H1 (cell line): ENCODE measurements at regions of chr1 and their contacts with region 1.

Region 1: GRCh38 chr1:15760520-15761211 is 2.1 kb downstream of the FBLIM1 start:
- DNase-seq: no peak
- H3K4me3 ChIP-seq: peak overlapping the region in 2 of 4 experiments; percentile 1 to 31; a peak in 3 of 8 replicates
- H3K27ac ChIP-seq: no peak overlapping the region
- H3K4me1 ChIP-seq: peaks cover 9 to 31% (median 27%) of the 10 kb centered on the region in 4 experiments
- H3K27me3 ChIP-seq: no peaks in the 10 kb centered on the region
- CTCF ChIP-seq: no peak
- EP300 ChIP-seq: no peak
- POLR2A ChIP-seq: no peak
- RAD21 ChIP-seq: peak; percentile 11 to 26; a peak in 1 of 4 replicates

Region 2: DNA sequence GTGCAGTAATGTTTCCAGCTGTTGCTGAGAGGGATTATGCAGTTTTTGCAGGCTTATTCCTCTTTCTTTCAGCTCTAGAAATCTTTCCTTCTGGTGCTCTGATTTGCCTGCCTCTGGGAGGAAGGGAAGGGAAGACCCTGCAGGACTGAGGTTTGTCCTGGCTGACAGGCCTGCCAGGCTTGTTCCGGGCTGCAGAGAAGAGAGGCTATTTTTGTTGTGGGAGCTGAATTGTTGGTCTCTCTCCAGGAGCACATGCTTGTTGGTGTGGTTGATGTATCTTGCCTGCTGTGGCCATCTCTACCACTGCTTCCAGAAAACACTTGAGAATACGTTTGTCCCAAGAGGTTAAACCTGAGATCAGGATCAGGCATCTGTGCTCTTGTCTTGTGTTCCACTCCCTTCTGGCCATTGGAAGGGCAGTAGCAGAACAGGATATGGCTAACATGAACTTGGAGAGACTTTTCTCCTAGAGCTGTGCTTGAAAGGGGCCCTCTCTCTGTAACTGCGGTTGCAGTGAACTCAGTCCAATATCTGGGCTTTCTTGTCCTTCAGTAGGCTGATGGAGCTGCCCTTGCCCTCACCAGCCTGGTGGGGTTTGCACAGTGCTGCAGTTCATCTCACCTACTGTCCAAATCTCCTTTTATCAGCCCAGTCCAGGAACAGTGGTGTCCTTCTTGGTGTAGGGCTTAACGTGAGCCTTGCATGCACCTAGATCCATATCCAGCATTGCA is 46.1 kb before region 1 on chr1:
- CTCF ChIA-PET with region 1: no interaction called
- POLR2A ChIA-PET with region 1: no interaction called
- DNase-seq: no peak
- H3K4me3 ChIP-seq: no peak overlapping the region
- H3K27ac ChIP-seq: no peak overlapping the region
- H3K4me1 ChIP-seq: no peaks in the 10 kb centered on the region
- H3K27me3 ChIP-seq: no peaks in the 10 kb centered on the region
- CTCF ChIP-seq: no peak
- EP300 ChIP-seq: no peak
- POLR2A ChIP-seq: no peak
- RAD21 ChIP-seq: no peak

Region 3: DNA sequence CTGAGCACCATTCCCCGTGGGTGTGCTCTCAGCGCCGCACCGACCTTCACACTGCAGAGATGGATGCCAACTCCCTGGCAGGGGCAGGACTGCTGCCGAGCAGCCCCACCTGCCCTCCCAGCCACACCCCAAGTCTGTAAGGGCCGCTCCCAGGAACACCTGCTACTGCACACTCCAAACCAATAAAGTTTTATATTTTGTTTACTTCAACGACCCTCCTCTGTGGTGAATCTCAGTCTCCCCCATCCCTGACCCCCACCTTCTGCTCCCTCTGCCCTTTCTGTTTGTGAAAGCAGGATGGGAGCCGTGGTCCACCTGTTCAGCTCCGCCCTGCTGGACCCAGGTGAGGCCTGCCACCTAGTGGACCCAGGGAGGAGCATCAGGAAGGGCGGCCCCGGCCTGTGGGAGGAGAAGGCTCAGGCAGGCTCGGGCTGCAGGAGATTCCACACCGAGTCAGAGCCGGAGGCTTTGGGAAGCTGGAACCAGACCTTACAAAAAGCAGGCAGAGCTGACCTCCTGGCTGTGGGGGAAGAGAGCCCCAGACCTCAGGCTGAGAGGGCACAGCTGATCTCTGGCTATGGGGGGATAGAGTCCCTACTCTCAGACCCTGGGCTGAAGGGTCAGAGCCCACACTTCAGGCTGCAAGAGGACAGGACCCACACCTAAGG is 19.3 kb before region 1 on chr1:
- CTCF ChIA-PET with region 1: interaction called, 11 read pairs
- POLR2A ChIA-PET with region 1: interaction called, 7 read pairs
- DNase-seq: peak; percentile 61 to 91
- H3K4me3 ChIP-seq: no peak overlapping the region
- H3K27ac ChIP-seq: no peak overlapping the region
- H3K4me1 ChIP-seq: peaks cover 0 to 20% (median 6%) of the 10 kb centered on the region in 4 experiments; a peak in 5 of 7 replicates
- H3K27me3 ChIP-seq: no peaks in the 10 kb centered on the region
- CTCF ChIP-seq: peak in 2 of 3 experiments; percentile 91 to 98; a peak in 3 of 4 replicates
- EP300 ChIP-seq: no peak
- POLR2A ChIP-seq: no peak
- RAD21 ChIP-seq: peak; percentile 94 to 97

Region 4: GRCh38 chr1:15749399-15750291 is 11.0 kb before region 1 on chr1:
- CTCF ChIA-PET with region 1: interaction called, 5 read pairs
- POLR2A ChIA-PET with region 1: interaction called, 14 read pairs
- DNase-seq: no peak
- H3K4me3 ChIP-seq: no peak overlapping the region
- H3K27ac ChIP-seq: no peak overlapping the region
- H3K4me1 ChIP-seq: peaks cover 0 to 7% (median 3%) of the 10 kb centered on the region in 4 experiments; a peak in 5 of 7 replicates
- H3K27me3 ChIP-seq: no peaks in the 10 kb centered on the region
- CTCF ChIP-seq: no peak
- EP300 ChIP-seq: no peak
- POLR2A ChIP-seq: no peak
- RAD21 ChIP-seq: no peak

Region 5: DNA sequence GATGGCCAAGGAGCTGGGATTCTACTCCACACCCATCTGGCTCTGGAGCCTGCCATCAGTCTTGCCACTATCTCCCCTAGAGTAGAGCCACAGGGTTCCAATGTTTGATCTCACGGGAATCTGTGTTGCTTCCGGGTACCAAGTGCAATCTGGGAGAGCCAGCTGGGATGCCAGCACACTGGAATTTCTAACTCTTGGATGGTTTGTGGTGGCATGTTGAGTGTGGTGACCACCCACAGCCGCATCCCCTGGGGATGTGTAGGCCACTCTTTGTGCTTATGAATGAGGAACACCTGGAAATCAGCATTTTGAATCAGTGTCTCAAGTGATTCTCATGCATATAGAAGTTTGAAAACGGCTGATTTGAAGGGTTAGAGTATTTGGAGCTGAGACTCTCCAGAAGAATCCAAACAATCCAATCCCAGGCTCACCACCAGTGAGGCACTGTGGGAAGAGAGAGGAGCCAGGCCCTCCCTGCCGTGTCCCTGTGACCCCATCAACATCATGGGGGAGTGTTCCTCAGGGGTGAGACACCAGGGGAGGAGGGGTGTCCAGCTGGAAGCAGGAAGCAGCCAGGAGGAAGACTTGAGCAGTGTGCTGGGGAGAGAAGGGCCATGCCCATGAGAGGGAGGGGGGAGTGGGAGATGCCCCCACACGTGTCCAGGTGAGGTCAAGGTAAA is 11.3 kb after region 1 on chr1:
- CTCF ChIA-PET with region 1: interaction called, 6 read pairs
- POLR2A ChIA-PET with region 1: interaction called, 33 read pairs
- DNase-seq: no peak
- H3K4me3 ChIP-seq: no peak overlapping the region
- H3K27ac ChIP-seq: no peak overlapping the region
- H3K4me1 ChIP-seq: no peaks in the 10 kb centered on the region
- H3K27me3 ChIP-seq: no peaks in the 10 kb centered on the region
- CTCF ChIP-seq: no peak
- EP300 ChIP-seq: no peak
- POLR2A ChIP-seq: no peak
- RAD21 ChIP-seq: no peak

Region 6: GRCh38 chr1:15835741-15836510 is 75.3 kb after region 1 on chr1:
- CTCF ChIA-PET with region 1: no interaction called
- POLR2A ChIA-PET with region 1: interaction called, 12 read pairs
- DNase-seq: peak; percentile 91 to 96
- H3K4me3 ChIP-seq: peak overlapping the region; percentile 68 to 80 (median 71)
- H3K27ac ChIP-seq: peak overlapping the region; percentile 98
- H3K4me1 ChIP-seq: peaks cover 0 to 9% (median under 1%) of the 10 kb centered on the region in 4 experiments; a peak in 3 of 7 replicates
- H3K27me3 ChIP-seq: no peaks in the 10 kb centered on the region
- CTCF ChIP-seq: no peak
- EP300 ChIP-seq: 0 out of 3 replicates have a peak, but pooled peaks of 1 of the 2 experiments have one; percentile 72
- POLR2A ChIP-seq: peak; percentile 8 to 40
- RAD21 ChIP-seq: no peak